ENCODE measurements at regions of chr2 and their contacts with region 1.

Region 1: DNA sequence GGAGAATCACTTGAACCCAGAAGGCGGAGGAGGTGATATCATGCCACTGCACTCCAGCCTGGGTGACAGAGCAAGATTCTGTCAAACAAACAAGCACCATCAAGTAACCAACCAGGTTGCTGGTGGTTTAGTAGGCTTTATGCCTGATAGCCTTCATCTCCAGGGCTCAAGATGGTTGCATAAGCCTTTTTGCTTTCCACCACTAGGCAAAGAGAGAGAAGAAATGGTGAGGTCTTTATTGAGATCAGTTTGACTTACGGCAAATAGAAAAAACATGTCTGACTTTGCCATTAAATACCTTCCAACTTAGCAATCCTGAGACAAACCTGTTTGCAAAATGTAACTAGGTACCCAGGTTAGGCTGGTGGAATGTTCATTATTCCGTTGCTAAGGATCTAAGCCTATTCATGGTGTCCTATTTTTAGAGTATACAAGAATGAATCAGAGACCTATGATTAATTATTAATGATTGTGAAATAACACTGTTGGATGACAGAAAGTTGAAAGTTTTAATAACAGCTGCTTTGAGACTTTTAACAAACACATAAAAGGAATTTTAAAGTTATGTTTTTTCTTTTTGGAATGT is 53.5 kb upstream of the SLC38A11 start:
- DNase-seq: no peak
- H3K4me3 ChIP-seq: no peak overlapping the region
- H3K27ac ChIP-seq: no peak overlapping the region
- H3K4me1 ChIP-seq: no peaks in the 10 kb centered on the region
- H3K27me3 ChIP-seq: peaks cover 9 to 17% of the 10 kb centered on the region in 2 experiments
- CTCF ChIP-seq: no peak
- POLR2A ChIP-seq: no peak

Region 2: DNA sequence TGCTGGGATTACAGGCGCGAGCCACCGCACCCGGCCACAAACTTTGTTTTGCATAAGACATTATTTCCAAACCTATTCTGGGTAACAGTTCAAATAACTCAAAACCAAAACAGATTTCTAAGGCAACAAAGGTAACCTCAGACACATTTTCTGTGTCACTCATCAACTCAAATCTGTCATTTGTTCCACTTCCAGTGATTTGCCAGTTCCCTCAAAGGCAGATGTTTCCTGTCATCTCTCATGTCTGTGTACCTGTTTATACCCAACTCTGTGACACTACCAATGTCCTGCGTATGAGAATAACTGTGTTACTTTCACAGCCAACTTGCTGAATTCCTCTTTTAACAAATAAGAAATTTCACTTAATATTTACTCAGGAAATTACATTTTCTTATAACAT is 140.6 kb after region 1 on chr2:
- CTCF ChIA-PET with region 1: no interaction called
- POLR2A ChIA-PET with region 1: no interaction called
- dilution Hi-C with region 1: no loop called
- intact Hi-C with region 1: loop called (anchors 10 kb)
- DNase-seq: no peak
- H3K4me3 ChIP-seq: no peak overlapping the region
- H3K27ac ChIP-seq: no peak overlapping the region
- H3K4me1 ChIP-seq: no peaks in the 10 kb centered on the region
- H3K27me3 ChIP-seq: peaks cover 2 to 4% of the 10 kb centered on the region in 2 experiments
- CTCF ChIP-seq: no peak
- POLR2A ChIP-seq: no peak